ENCODE measurements at regions of chr6 and their contacts with region 1.

Region 1: DNA sequence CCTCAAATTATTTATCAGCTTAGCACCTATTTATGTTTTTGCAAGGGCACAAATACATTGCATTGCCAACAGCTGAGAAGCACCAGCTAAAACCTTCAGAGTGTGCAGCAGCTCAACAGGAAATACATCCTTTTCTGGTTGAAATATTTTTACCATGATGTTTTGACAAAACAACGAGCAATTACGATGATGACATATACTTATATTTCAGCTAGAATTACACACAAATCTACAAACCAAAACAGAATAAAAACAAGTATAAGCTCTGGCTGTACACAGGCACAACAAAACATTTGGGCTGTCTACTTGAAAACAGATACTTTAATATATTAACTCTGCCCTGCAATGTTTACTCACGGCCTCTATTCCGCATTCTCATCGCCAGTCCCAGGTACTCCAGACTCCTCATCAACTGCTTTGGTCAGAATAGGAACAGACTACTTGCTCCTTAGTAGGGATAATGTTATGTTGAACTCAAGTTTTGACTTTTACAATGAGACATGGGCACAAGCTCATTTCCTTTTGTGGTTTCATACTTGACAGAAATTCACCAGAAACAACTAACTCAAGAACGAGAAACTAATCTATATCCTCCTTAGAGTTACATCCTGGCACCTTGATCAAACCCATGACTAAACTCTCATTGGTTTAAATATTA is 377.6 kb downstream of the ESR1 start:
- DNase-seq: peak; percentile 31
- H3K4me3 Mint-ChIP-seq: peak overlapping the region; percentile 87
- H3K27ac Mint-ChIP-seq: peak overlapping the region; percentile 99
- H3K4me1 Mint-ChIP-seq: peaks cover 61% of the 10 kb centered on the region
- H3K27me3 Mint-ChIP-seq: no peaks in the 10 kb centered on the region

Region 2: DNA sequence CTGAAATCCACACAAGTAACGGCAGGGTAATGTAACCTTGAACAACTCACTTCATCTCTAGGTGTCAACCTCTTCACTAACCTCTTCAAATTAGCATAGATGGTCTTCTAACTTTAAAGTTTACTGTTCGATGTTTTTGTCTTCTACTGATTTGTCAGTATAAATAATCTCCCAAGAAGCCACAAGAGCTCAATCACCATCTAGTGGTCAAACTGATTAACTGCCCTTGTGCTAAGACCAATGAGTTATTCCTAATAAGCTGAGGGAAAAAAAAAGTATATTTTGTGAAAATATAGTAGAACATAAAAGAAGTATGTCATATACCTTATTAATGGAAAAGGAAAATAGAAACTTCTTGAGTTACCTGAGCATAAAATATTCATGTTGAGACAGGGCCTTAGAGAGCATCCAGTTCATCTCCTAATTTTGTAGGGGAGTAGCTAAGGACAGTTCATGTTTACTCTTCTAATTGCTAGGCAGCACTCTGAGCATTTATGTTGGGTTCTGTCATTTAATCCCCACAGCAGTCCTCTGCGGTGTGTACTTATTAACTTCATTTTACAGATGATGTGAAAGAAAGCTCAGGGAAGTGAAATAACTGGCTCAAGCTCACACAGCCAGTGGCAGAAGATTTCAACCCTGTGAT is 60.5 kb before region 1 on chr6:
- CTCF ChIA-PET with region 1: interaction called, 11 read pairs
- POLR2A ChIA-PET with region 1: interaction called, 3 read pairs
- DNase-seq: no peak
- H3K4me3 Mint-ChIP-seq: no peak overlapping the region
- H3K27ac Mint-ChIP-seq: no peak overlapping the region
- H3K4me1 Mint-ChIP-seq: no peaks in the 10 kb centered on the region
- H3K27me3 Mint-ChIP-seq: no peaks in the 10 kb centered on the region

Region 3: GRCh38 chr6:152170705-152171667 is 14.1 kb before region 1 on chr6:
- CTCF ChIA-PET with region 1: interaction called, 18 read pairs
- POLR2A ChIA-PET with region 1: interaction called, 110 read pairs
- DNase-seq: peak; percentile 78
- H3K4me3 Mint-ChIP-seq: peak overlapping the region; percentile 58
- H3K27ac Mint-ChIP-seq: peak overlapping the region; percentile 93
- H3K4me1 Mint-ChIP-seq: peaks cover 40% of the 10 kb centered on the region
- H3K27me3 Mint-ChIP-seq: no peaks in the 10 kb centered on the region

Region 4: DNA sequence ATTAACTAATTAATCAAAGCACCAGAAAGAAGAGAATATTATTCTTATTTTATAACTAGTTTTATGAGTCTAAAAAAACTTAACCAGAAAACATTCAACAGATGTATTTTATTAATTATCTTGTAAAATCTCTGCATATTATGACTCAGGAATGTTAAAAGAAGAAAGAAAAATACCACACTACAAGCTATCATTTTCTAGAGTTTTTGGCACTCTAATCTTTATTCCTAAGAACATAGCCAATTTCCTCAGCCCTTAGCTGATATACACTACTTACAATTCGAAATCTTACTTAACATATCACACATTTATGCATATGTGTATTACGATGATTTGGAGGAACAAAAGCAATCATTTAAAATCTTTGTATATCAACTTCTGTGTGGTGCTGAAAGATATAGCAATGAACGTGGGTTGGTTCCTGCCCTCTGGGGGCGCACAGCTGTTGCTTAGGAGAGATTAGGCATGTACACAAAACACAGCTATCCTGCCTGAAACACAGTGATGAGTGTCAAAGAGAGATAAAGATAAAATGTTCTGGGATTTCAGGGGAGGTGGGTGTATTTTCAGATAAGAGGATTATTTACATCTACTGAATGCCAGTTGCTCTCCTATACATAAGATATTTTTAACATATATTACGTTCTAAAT is 47.6 kb after region 1 on chr6:
- CTCF ChIA-PET with region 1: interaction called, 14 read pairs
- POLR2A ChIA-PET with region 1: interaction called, 20 read pairs
- DNase-seq: no peak
- H3K4me3 Mint-ChIP-seq: peak overlapping the region; percentile 48
- H3K27ac Mint-ChIP-seq: peak overlapping the region; percentile 70
- H3K4me1 Mint-ChIP-seq: peaks cover 22% of the 10 kb centered on the region
- H3K27me3 Mint-ChIP-seq: no peaks in the 10 kb centered on the region

Region 5: GRCh38 chr6:152301764-152302568 is 116.9 kb after region 1 on chr6:
- CTCF ChIA-PET with region 1: interaction called, 16 read pairs
- POLR2A ChIA-PET with region 1: interaction called, 27 read pairs
- DNase-seq: peak; percentile 92
- H3K4me3 Mint-ChIP-seq: peak overlapping the region; percentile 95
- H3K27ac Mint-ChIP-seq: peak overlapping the region; percentile 97
- H3K4me1 Mint-ChIP-seq: peaks cover 30% of the 10 kb centered on the region
- H3K27me3 Mint-ChIP-seq: no peaks in the 10 kb centered on the region

Region 6: GRCh38 chr6:152982768-152983636 is 798.0 kb after region 1 on chr6 and contains the start of gene FBXO5:
- CTCF ChIA-PET with region 1: interaction called, 4 read pairs
- POLR2A ChIA-PET with region 1: interaction called, 13 read pairs
- DNase-seq: peak; percentile 98
- H3K4me3 Mint-ChIP-seq: peak within 1 kb of the TSS; percentile 90
- H3K27ac Mint-ChIP-seq: peak within 1 kb of the TSS; percentile 96
- H3K4me1 Mint-ChIP-seq: peaks cover 51% of the 10 kb centered on the region
- H3K27me3 Mint-ChIP-seq: no peaks in the 10 kb centered on the region
- total RNA-seq, gene FBXO5: 68.7 to 71.2 TPM

Measured in activated CD4-positive, alpha-beta memory T cell treated with anti-CD3 and anti-CD28 coated beads, Interleukin-2, amount 10 ng/mL, durations not matched to agents 7 days and 5 days (primary cell).